Activated CD4-positive, alpha-beta memory T cell treated with anti-CD3 and anti-CD28 coated beads for 36 hours (primary cell): ENCODE measurements at regions of chrX and their contacts with region 1.

Region 1: GRCh38 chrX:154515878-154516655 is at the start of gene FAM3A:
- DNase-seq: peak; percentile 95
- H3K4me3 Mint-ChIP-seq: peak within 1 kb of the TSS; percentile 84
- H3K27ac Mint-ChIP-seq: peak within 1 kb of the TSS; percentile 90
- H3K4me1 Mint-ChIP-seq: peaks cover 17% of the 10 kb centered on the region
- H3K27me3 Mint-ChIP-seq: no peaks in the 10 kb centered on the region
- total RNA-seq, gene FAM3A: 21.4 to 28.4 TPM

Region 2: GRCh38 chrX:154490414-154491083 is 25.5 kb before region 1 on chrX and contains the start of gene SLC10A3:
- CTCF ChIA-PET with region 1: interaction called, 3 read pairs
- POLR2A ChIA-PET with region 1: interaction called, 5 read pairs
- intact Hi-C with region 1: loop called (anchors 1 kb)
- DNase-seq: peak; percentile 94
- H3K4me3 Mint-ChIP-seq: peak within 1 kb of the TSS; percentile 87
- H3K27ac Mint-ChIP-seq: peak within 1 kb of the TSS; percentile 89
- H3K4me1 Mint-ChIP-seq: peaks cover 17% of the 10 kb centered on the region
- H3K27me3 Mint-ChIP-seq: no peaks in the 10 kb centered on the region
- total RNA-seq, gene SLC10A3: 14.4 to 16.1 TPM

Region 3: GRCh38 chrX:155263854-155264628 is 748.0 kb after region 1 on chrX and contains the start of gene RAB39B:
- CTCF ChIA-PET with region 1: no interaction called
- POLR2A ChIA-PET with region 1: no interaction called
- intact Hi-C with region 1: no loop called
- DNase-seq: peak; percentile 86
- H3K4me3 Mint-ChIP-seq: peak within 1 kb of the TSS; percentile 68
- H3K27ac Mint-ChIP-seq: peak within 1 kb of the TSS; percentile 94
- H3K4me1 Mint-ChIP-seq: peaks cover 24% of the 10 kb centered on the region
- H3K27me3 Mint-ChIP-seq: no peaks in the 10 kb centered on the region
- total RNA-seq, gene RAB39B: 13.6 to 15.3 TPM